GM12878 (cell line): ENCODE measurements at regions of chr14 and their contacts with region 1.

Region 1: GRCh38 chr14:50038398-50039119 is 77.8 kb downstream of the VCPKMT start:
- DNase-seq: peak; percentile 100
- ATAC-seq: peak; percentile 87
- H3K4me3 ChIP-seq: peak overlapping the region; percentile 1; the same call in 1 of the 2 replicates
- H3K27ac ChIP-seq: peak overlapping the region; percentile 96
- H3K4me1 ChIP-seq: peaks cover 49% of the 10 kb centered on the region
- H3K27me3 ChIP-seq: no peaks in the 10 kb centered on the region
- CTCF ChIP-seq: 0 out of 6 replicates have a peak, but pooled peaks of 2 of the 3 experiments have one; percentile 10
- EP300 ChIP-seq: peak; percentile 91 to 99
- POLR2A ChIP-seq: peak; percentile 56
- RAD21 ChIP-seq: peak; percentile 35

Region 2: DNA sequence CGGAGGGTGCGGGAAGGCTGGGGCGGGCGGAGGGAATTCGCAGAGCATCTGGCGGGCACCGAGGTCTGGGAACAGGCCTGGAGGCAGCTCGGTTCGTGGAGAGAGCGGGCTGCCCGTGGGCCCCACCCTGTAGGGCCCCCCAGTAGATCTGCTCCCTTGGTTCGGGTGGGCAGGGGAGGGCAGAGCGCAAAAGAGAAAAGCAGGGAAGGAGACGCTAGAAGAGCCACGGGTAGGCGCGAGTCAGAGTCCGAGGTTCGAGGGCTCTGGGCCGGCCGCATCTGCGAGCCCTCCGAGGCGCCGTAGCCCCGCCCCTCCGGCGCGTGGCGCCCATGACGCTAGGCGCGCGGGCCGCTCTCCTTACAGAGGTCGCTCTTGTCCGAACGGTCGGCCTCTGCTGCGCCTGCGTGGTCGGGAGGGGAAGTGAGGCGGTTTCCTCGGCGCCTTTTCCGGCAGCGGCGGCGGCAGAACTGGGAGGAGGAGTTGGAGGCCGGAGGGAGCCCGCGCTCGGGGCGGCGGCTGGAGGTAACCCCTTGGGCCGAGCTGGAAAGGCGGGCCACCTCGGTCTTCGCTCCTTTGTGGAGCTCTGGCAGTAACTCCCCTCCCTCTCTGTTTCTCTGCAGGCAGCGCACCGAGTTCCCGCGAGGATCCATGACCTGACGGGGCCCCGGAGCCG is 145.8 kb before region 1 on chr14 and contains the start of gene ARF6:
- CTCF ChIA-PET with region 1: no interaction called
- POLR2A ChIA-PET with region 1: interaction called, 6 read pairs
- RAD21 ChIA-PET with region 1: interaction called, 3 read pairs
- SMC1A ChIA-PET with region 1: interaction called, 4 read pairs
- in situ Hi-C with region 1: no loop called
- intact Hi-C with region 1: loop called (anchors 1 kb)
- DNase-seq: peak; percentile 81
- ATAC-seq: peak; percentile 83
- H3K4me3 ChIP-seq: peak within 1 kb of the TSS; percentile 97
- H3K27ac ChIP-seq: peak within 1 kb of the TSS; percentile 100
- H3K4me1 ChIP-seq: peaks cover 5% of the 10 kb centered on the region
- H3K27me3 ChIP-seq: no peaks in the 10 kb centered on the region
- CTCF ChIP-seq: peak in 2 of 3 experiments; percentile 15 to 29; a peak in 1 of 6 replicates
- EP300 ChIP-seq: no peak
- POLR2A ChIP-seq: peak; percentile 92
- RAD21 ChIP-seq: 0 out of 2 replicates have a peak, but pooled peaks have one; percentile 10
- polyA plus RNA-seq, gene ARF6: 46.8 to 86.6 TPM

Region 3: DNA sequence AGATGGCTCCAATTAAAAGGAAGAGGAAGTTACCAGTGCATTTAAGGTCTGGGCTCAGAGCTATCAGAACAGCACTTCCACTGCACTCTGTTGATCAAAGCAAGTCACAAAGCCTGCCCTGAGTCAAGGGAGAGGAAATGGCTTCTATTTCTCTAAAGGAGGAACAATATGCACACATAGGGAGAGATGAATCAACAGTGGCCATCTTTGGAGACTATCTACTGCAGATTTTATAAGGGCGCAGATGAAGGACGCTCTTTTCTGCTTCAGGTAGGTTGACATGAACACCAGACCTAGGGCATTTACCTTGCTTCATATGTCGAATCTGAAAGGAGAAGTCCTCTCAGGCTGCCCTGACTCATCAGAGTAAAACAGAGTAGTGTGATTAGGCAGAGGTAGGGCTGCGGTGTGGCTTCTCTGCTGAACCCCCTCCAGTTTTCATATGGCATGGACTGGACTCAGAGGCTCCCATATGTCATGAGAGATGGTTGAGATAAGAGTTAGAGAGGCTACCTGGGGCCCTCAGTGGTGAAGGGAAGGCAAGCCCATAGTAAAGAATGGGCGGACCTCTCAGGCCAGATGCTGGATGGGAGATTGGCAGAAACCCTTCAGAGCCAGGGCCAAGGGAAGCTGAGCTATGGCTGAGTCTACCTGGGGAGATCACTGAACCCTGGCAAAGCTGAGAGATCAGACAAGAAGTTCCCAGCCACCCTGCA is 61.3 kb before region 1 on chr14:
- CTCF ChIA-PET with region 1: interaction called, 16 read pairs
- POLR2A ChIA-PET with region 1: interaction called, 3 read pairs
- RAD21 ChIA-PET with region 1: interaction called, 26 read pairs
- SMC1A ChIA-PET with region 1: interaction called, 14 read pairs
- in situ Hi-C with region 1: no loop called
- intact Hi-C with region 1: no loop called
- DNase-seq: no peak
- ATAC-seq: peak; percentile 91
- H3K4me3 ChIP-seq: peak overlapping the region; percentile 7; the same call in 1 of the 2 replicates
- H3K27ac ChIP-seq: peak overlapping the region; percentile 77
- H3K4me1 ChIP-seq: peaks cover 33% of the 10 kb centered on the region
- H3K27me3 ChIP-seq: no peaks in the 10 kb centered on the region
- CTCF ChIP-seq: no peak
- EP300 ChIP-seq: no peak
- POLR2A ChIP-seq: peak; percentile 58
- RAD21 ChIP-seq: 0 out of 2 replicates have a peak, but pooled peaks have one; percentile 7

Region 4: GRCh38 chr14:50023671-50024490 is 14.7 kb before region 1 on chr14:
- CTCF ChIA-PET with region 1: interaction called, 9 read pairs
- POLR2A ChIA-PET with region 1: interaction called, 12 read pairs
- RAD21 ChIA-PET with region 1: interaction called, 8 read pairs
- SMC1A ChIA-PET with region 1: interaction called, 9 read pairs
- in situ Hi-C with region 1: no loop called
- intact Hi-C with region 1: no loop called
- DNase-seq: no peak
- ATAC-seq: no peak
- H3K4me3 ChIP-seq: no peak overlapping the region
- H3K27ac ChIP-seq: no peak overlapping the region
- H3K4me1 ChIP-seq: peaks cover 14% of the 10 kb centered on the region
- H3K27me3 ChIP-seq: no peaks in the 10 kb centered on the region
- CTCF ChIP-seq: no peak
- EP300 ChIP-seq: no peak
- POLR2A ChIP-seq: no peak
- RAD21 ChIP-seq: no peak

Region 5: DNA sequence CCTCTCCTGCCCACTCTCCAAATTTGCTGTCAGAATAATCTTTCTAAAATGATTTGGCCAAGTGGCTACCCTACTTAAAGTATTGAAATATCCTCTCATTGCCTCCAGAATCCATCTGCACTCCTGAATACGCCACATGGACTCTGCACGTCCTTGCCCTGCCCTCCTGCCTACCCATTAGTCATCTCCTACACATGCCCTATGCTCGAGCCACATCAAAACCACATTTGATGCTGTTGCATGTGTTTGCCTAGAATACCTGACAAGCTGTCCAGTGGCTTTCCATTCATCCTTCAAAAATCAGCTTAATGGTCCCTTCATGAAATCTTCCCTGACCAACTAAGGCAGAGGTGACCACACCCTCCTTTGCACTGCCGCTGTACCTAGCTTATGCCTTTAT is 60.8 kb after region 1 on chr14:
- CTCF ChIA-PET with region 1: interaction called, 15 read pairs
- POLR2A ChIA-PET with region 1: no interaction called
- RAD21 ChIA-PET with region 1: interaction called, 13 read pairs
- SMC1A ChIA-PET with region 1: interaction called, 37 read pairs
- in situ Hi-C with region 1: no loop called
- intact Hi-C with region 1: no loop called
- DNase-seq: no peak
- ATAC-seq: no peak
- H3K4me3 ChIP-seq: no peak overlapping the region
- H3K27ac ChIP-seq: no peak overlapping the region
- H3K4me1 ChIP-seq: peaks cover 12% of the 10 kb centered on the region
- H3K27me3 ChIP-seq: no peaks in the 10 kb centered on the region
- CTCF ChIP-seq: no peak
- EP300 ChIP-seq: no peak
- POLR2A ChIP-seq: no peak
- RAD21 ChIP-seq: no peak